ENCODE measurements at regions of chr5 and their contacts with region 1.

Region 1: DNA sequence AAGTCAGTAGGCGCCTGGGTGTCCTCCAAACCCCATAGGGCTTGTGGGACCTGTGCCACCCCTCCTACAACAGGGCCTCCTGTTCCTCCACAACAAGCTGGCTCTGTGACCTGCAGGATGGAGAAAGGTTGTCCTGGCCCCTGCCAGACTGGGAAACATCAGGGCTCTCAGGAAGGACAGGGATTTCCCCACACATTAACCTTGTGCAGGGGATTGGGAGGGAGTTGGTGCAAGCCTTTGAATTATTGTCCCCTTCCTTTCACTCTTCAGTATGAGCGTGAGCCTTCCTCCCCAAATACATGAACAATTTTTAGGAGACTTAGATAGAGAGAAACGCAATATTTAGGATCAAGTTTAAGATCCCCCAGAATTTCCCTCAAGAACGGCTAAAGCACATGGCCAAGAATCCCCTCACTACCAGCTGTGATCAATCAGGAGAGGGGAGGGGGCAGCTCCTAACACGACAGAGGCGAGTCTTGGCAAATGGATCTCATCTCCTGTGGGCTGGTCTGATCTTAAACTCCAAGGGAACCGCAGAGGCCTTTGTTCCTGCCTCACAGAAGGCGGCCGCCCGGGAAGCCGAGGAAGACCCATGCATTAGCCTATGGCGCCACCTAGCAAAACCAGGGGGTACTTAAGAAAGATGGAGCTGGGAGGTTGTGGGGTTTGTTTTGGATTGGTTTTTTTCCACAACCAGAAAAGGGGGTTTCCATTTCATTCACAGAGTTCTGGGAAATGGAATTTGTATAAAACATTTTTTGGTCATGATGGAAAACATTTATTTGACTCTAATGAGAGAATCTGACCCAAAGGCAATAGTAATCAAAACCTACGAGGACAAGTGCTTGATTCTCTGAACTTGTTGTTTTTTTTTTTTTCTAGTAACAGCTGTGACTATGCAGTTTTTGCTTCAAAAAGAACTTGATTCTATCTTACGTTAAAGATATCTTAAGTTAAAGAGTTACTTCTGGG is 36.1 kb upstream of the OSMR start:
- DNase-seq: peak in 2 of 3 donors; percentile 2 to 32
- H3K4me3 ChIP-seq: no peak overlapping the region
- H3K4me3 Mint-ChIP-seq: peak overlapping the region; percentile 20 to 52
- H3K27ac ChIP-seq: no peak overlapping the region
- H3K27ac Mint-ChIP-seq: no peak overlapping the region
- H3K4me1 ChIP-seq: no peaks in the 10 kb centered on the region
- H3K4me1 Mint-ChIP-seq: no peaks in the 10 kb centered on the region
- H3K27me3 ChIP-seq: peaks cover 2 to 49% of the 10 kb centered on the region in 2 donors
- H3K27me3 Mint-ChIP-seq: peaks cover 21 to 54% (median 38%) of the 10 kb centered on the region in 3 donors
- CTCF ChIP-seq: peak; percentile 60

Region 2: DNA sequence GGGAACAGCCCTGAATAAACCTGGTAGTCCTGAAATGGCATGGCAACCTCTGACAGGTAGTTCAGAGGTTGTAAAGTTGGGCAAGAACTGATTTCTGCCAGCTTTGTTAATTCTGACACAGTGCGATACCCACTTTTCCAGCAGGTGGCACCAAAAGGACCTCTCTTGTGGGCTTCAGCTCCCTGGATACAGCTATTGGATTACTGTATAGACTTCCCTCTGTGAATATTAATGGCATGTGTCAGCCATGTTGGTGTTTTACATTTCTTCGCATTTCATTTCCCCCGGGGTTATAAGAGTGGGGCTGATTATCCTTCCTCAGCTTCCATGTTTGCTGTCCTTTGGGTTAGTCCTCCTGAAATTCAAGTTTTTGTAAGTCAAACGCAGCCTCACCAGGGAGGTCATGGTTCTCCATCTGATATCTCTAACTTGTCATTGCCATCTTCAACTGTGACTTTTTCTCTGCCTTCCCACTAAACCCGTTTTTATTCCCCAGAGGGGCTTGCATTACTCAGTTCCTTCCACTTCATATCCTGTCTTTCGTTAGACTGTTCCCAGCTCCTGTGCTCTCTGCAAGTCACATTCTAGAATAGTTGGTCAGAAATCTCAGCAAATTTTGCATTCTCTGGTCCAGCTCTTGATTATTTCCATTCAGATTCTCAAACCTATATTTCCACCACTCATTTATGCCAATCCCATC is 388.8 kb before region 1 on chr5:
- intact Hi-C with region 1: loop called in 1 of 2 experiments (anchors 5 kb)
- DNase-seq: peak in 1 of 3 donors; percentile 7
- H3K4me3 ChIP-seq: no peak overlapping the region
- H3K4me3 Mint-ChIP-seq: no peak overlapping the region
- H3K27ac ChIP-seq: no peak overlapping the region
- H3K27ac Mint-ChIP-seq: no peak overlapping the region
- H3K4me1 ChIP-seq: no peaks in the 10 kb centered on the region
- H3K4me1 Mint-ChIP-seq: no peaks in the 10 kb centered on the region
- H3K27me3 ChIP-seq: peaks cover 29 to 38% of the 10 kb centered on the region in 2 donors
- H3K27me3 Mint-ChIP-seq: peaks cover 34 to 53% (median 47%) of the 10 kb centered on the region in 3 donors
- CTCF ChIP-seq: peak; percentile 52

Measured in CD14-positive monocyte (primary cell).